Tibial artery (tissue), 4 donors: ENCODE measurements at regions of chr4 and their contacts with region 1.

Region 1: GRCh38 chr4:48518143-48518542 is 28.1 kb downstream of the ZAR1 start:
- DNase-seq: no peak
- H3K4me3 ChIP-seq: no peak overlapping the region
- H3K27ac ChIP-seq: no peak overlapping the region
- H3K4me1 ChIP-seq: no peaks in the 10 kb centered on the region
- H3K27me3 ChIP-seq: no peaks in the 10 kb centered on the region
- CTCF ChIP-seq: no peak

Region 2: DNA sequence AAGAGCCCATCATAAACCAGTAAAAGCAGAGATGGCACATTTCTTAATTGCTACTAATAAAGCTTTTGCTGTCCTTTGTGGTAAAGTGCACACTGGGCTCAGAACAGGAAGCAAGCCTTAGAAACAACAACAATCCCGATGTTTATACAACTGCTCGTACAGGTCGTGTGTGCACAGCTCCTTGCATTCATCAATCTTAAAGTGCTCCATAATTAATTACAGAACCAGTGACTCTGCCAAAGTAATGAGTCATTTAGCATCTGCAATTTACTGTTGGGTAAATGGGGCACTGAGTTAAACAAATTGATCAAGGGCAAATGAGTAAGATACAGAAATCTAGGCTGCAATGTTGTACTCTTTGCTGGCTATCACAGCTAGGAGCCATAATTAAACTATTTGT is 322.8 kb before region 1 on chr4:
- intact Hi-C with region 1: no loop called
- DNase-seq: no peak
- H3K4me3 ChIP-seq: no peak overlapping the region
- H3K27ac ChIP-seq: no peak overlapping the region
- H3K4me1 ChIP-seq: no peaks in the 10 kb centered on the region
- H3K27me3 ChIP-seq: no peaks in the 10 kb centered on the region
- CTCF ChIP-seq: no peak

Region 3: DNA sequence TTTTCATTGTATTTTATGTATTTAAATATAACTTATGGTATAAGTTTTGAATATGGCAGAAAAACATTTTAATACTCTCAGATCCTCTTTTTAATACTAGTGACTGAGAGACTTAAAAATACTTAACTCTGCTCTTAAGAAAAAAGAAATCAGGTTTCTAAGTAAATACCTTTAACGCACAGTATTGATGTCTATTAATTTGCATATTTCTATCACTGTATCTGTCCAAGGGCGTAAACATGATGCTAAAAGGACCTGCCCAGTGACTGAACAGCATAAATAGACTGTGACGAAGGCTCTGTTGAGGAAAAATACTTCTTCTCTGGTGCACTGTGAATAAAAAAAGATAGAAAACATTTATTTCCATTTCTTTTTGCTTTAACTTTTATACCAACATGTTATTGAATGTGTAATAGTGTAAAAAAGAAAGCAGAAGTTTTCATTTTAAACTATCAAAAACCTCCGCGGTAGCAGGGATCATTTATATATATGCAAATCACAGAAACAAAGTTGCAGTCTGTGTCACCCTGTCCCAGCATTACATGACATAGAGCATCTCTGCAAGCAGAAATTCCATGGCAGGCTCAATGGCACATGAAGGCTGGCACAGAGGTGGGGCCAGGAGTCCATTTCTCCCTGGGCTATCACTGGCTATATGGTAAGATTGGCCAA is 47.4 kb after region 1 on chr4:
- intact Hi-C with region 1: loop called (anchors 10 kb)
- DNase-seq: no peak
- H3K4me3 ChIP-seq: no peak overlapping the region
- H3K27ac ChIP-seq: no peak overlapping the region
- H3K4me1 ChIP-seq: no peaks in the 10 kb centered on the region
- H3K27me3 ChIP-seq: no peaks in the 10 kb centered on the region
- CTCF ChIP-seq: no peak